Panc1 (cell line): ENCODE measurements at regions of chrX and their contacts with region 1.

Region 1: DNA sequence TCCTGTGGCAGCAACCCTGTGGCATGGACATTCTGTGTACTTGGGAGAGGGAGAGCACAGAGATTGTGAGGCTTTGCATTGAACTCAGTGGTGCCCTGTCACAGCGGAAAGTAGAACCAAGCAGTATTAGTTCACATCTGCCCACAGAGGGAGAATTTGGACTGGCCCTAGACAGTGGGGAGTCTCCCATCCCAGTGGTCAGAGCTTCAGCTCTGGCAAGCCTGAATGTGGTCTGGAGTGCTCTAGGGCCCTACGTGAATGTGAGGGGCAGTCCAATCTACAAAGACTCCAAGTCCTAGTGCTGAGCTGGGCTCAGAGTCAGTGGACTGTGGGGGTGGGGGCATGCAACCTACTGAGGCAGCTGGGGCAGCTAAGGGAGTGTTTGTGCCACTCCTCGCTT is 34.8 kb downstream of the ZIC3 start:
- DNase-seq: no peak
- ATAC-seq: no peak
- H3K4me3 ChIP-seq: no peak overlapping the region
- H3K27ac ChIP-seq: no peak overlapping the region
- H3K4me1 ChIP-seq: no peaks in the 10 kb centered on the region
- H3K27me3 ChIP-seq: no peaks in the 10 kb centered on the region; the same call in 1 of the 2 replicates
- CTCF ChIP-seq: no peak

Region 2: DNA sequence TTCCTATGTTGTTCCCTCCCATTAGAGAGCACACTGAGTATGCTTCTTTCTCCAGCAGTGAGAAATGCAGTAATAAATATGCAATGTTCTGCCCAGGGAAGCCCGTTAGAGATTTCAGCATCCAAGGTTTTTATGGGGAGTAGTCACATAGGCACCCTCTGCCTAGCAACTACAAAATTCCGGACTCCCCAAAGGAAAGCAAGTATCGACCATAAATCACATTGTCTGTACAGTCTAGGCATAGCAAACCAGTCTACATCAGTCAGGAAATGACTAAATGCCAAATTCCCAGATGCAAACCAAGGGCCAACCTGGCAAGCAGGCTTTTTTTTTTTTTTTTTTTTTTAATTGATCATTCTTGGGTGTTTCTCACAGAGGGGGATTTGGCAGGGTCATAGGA is 601.7 kb before region 1 on chrX:
- CTCF ChIA-PET with region 1: no interaction called
- POLR2A ChIA-PET with region 1: interaction called, 11 read pairs
- in situ Hi-C with region 1: no loop called
- intact Hi-C with region 1: no loop called
- DNase-seq: no peak
- ATAC-seq: no peak
- H3K4me3 ChIP-seq: no peak overlapping the region
- H3K27ac ChIP-seq: no peak overlapping the region
- H3K4me1 ChIP-seq: no peaks in the 10 kb centered on the region
- H3K27me3 ChIP-seq: no peaks in the 10 kb centered on the region
- CTCF ChIP-seq: no peak